Activated B cell treated with CpG ODN at 0.5 μM for 24 hours (primary cell): ENCODE measurements at regions of chr19 and their contacts with region 1.

Region 1: GRCh38 chr19:40381321-40381720 is 8.7 kb downstream of the HIPK4 start:
- DNase-seq: no peak
- ATAC-seq: no peak
- H3K4me3 Mint-ChIP-seq: no peak overlapping the region
- H3K27ac Mint-ChIP-seq: no peak overlapping the region
- H3K4me1 Mint-ChIP-seq: no peaks in the 10 kb centered on the region
- H3K27me3 Mint-ChIP-seq: no peaks in the 10 kb centered on the region
- CTCF ChIP-seq: no peak

Region 2: DNA sequence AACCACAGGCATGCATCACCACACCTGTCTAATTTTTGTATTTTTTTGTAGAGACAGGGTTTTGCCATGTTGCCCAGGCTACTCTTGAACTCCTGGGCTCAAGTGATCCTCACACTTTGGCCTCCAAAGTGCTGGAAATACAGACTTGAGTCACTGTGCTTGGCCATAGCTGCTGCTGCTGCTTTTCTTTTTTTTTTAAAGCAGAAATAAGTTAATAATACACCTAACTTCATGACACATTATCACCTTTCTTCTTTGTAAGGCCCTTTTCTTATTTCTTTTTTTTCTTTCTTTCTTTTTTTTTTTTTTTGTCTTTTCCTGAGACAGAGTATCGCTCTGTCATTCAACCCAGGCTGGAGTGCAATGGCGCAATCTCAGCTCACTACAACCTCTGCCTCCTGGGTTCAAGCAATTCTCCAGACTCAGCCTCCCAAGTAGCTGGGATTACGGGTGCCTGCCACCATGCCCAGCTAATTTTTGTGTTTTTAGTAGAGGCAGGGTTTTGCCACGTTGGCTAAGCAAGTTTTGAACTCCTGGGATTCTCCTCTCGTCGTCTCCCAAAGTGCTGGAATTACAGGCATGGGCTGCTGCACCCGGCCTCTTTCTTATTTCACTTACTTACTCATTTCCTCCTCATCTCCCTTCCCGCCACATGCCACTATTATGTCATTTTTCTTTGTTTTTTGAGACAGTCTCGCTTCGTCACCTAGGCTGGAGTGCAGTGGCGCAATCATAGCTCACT is 204.1 kb after region 1 on chr19:
- CTCF ChIA-PET with region 1: no interaction called
- POLR2A ChIA-PET with region 1: interaction called, 12 read pairs
- intact Hi-C with region 1: no loop called
- DNase-seq: no peak
- ATAC-seq: no peak
- H3K4me3 Mint-ChIP-seq: no peak overlapping the region
- H3K27ac Mint-ChIP-seq: no peak overlapping the region
- H3K4me1 Mint-ChIP-seq: peaks cover 16% of the 10 kb centered on the region
- H3K27me3 Mint-ChIP-seq: no peaks in the 10 kb centered on the region
- CTCF ChIP-seq: no peak